ENCODE measurements at regions of chr21 and their contacts with region 1.

Region 1: DNA sequence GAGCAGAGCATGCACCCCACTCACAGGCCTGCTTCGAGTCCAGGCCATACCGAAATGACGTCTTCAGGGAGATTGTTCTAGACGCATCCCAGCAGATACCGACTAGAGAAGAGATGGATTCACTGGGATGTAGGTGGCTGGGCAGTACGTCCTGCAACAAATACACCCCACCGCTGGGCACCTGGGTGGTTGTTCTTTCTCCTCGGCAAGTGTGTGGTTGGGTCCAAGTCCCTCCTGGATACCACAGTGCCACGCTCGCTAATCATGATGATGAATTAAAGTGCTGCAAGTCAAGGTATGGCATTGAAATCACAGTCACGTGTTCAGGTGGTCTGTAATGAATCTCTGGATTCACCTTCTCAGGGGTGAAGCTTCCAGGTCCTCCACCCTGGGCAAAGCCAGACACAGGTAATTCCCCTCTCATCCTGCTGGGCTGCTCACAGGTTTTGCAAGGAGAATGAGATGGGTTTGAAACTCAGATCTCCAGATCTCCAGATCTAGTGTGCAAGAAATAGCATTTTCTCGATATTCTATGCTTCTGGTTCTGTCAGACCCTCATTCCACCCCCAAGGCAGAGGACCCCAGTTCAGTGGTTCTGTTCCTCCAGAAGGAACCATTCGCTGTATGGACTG is 45.7 kb downstream of the UBASH3A start:
- DNase-seq: no peak
- ATAC-seq: no peak
- H3K4me3 ChIP-seq: no peak overlapping the region
- H3K4me3 Mint-ChIP-seq: peak overlapping the region in 2 of 10 donors; percentile 52 to 60
- H3K27ac ChIP-seq: peak overlapping the region; percentile 61
- H3K27ac Mint-ChIP-seq: peak overlapping the region; percentile 93 to 99 (median 97)
- H3K4me1 ChIP-seq: peaks cover 4 to 15% of the 10 kb centered on the region in 2 donors
- H3K4me1 Mint-ChIP-seq: peaks cover 13 to 55% (median 40%) of the 10 kb centered on the region in 7 donors
- H3K27me3 ChIP-seq: no peaks in the 10 kb centered on the region
- H3K27me3 Mint-ChIP-seq: peaks cover 0 to 4% (median 0%) of the 10 kb centered on the region in 5 donors

Region 2: GRCh38 chr21:42414928-42415769 is 34.3 kb before region 1 on chr21:
- CTCF ChIA-PET with region 1: interaction called, 3 read pairs
- POLR2A ChIA-PET with region 1: interaction called, 5 read pairs
- intact Hi-C with region 1: loop called in 1 of 2 experiments (anchors 2 kb)
- DNase-seq: peak; percentile 48 to 96 (median 80)
- ATAC-seq: peak; percentile 96
- H3K4me3 ChIP-seq: peak overlapping the region; percentile 49
- H3K4me3 Mint-ChIP-seq: peak overlapping the region; percentile 65 to 85 (median 75)
- H3K27ac ChIP-seq: peak overlapping the region; percentile 92
- H3K27ac Mint-ChIP-seq: peak overlapping the region in 8 of 9 donors; percentile 88 to 99 (median 97)
- H3K4me1 ChIP-seq: peaks cover 59 to 77% of the 10 kb centered on the region in 2 donors
- H3K4me1 Mint-ChIP-seq: peaks cover 23 to 75% (median 69%) of the 10 kb centered on the region in 7 donors
- H3K27me3 ChIP-seq: no peaks in the 10 kb centered on the region
- H3K27me3 Mint-ChIP-seq: no peaks in the 10 kb centered on the region

Region 3: GRCh38 chr21:42513985-42514882 is 64.8 kb after region 1 on chr21:
- CTCF ChIA-PET with region 1: interaction called, 4 read pairs
- POLR2A ChIA-PET with region 1: interaction called, 4 read pairs
- intact Hi-C with region 1: loop called in 1 of 2 experiments (anchors 2 kb)
- DNase-seq: peak in 8 of 9 donors; percentile 42 to 76 (median 54)
- ATAC-seq: peak; percentile 83
- H3K4me3 ChIP-seq: peak overlapping the region; percentile 82
- H3K4me3 Mint-ChIP-seq: peak overlapping the region; percentile 76 to 97 (median 89)
- H3K27ac ChIP-seq: peak overlapping the region; percentile 87
- H3K27ac Mint-ChIP-seq: peak overlapping the region; percentile 58 to 88 (median 84)
- H3K4me1 ChIP-seq: peaks cover 18 to 20% of the 10 kb centered on the region in 2 donors
- H3K4me1 Mint-ChIP-seq: peaks cover 22 to 45% (median 38%) of the 10 kb centered on the region in 7 donors
- H3K27me3 ChIP-seq: no peaks in the 10 kb centered on the region
- H3K27me3 Mint-ChIP-seq: peaks cover 0 to 19% (median 0%) of the 10 kb centered on the region in 5 donors

Region 4: GRCh38 chr21:42781150-42781970 is 331.9 kb after region 1 on chr21:
- CTCF ChIA-PET with region 1: no interaction called
- POLR2A ChIA-PET with region 1: no interaction called
- intact Hi-C with region 1: no loop called
- DNase-seq: peak in 1 of 9 donors; percentile 11
- ATAC-seq: no peak
- H3K4me3 ChIP-seq: peak overlapping the region; percentile 30
- H3K4me3 Mint-ChIP-seq: peak overlapping the region; percentile 40 to 92 (median 80)
- H3K27ac ChIP-seq: peak overlapping the region; percentile 7
- H3K27ac Mint-ChIP-seq: peak overlapping the region; percentile 31 to 100 (median 87)
- H3K4me1 ChIP-seq: peaks cover 14 to 44% of the 10 kb centered on the region in 2 donors
- H3K4me1 Mint-ChIP-seq: peaks cover 35 to 65% (median 48%) of the 10 kb centered on the region in 7 donors
- H3K27me3 ChIP-seq: no peaks in the 10 kb centered on the region
- H3K27me3 Mint-ChIP-seq: peaks cover 0 to 37% (median 0%) of the 10 kb centered on the region in 5 donors